Right ventricle myocardium inferior (tissue), 1 donor: ENCODE measurements at regions of chr20 and their contacts with region 1.

Region 1: DNA sequence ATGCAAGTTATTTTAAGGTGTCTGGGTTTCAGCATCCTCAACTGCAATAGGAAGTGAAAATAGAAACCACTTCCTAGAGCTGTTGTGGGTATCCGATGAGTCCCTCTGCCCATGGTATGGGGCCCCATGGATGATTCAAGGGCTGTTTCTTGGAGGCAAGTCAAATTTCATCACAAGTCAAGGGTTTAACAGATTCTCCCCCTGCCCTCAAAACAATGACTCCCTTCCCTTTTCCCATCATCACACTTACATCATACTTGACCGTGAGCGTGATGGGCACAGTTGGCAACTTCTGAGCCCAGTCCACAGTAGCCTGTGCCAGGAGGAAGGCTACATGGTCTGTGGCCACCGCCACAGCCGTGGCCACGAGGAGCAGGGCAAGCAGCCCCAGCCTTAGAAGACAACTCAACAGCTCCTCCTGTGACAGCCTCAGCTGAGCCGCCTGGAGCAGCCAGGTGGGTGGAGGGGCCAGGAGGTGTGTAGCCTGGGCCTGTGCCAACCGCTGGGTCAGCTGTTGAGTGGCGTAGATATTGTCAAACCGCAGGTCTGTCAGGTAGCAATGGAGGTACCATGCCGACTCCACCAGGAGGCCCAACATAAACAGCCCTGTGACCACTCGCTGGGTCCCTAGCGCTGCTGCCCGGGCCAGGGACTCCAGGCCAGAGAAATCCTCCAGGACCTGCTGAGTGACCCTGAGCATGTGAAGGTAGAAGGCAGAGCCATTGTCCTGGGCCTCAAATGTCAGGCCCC is 5.2 kb downstream of the OCSTAMP start:
- DNase-seq: no peak
- ATAC-seq: no peak

Region 2: GRCh38 chr20:46501337-46501942 is 43.8 kb before region 1 on chr20:
- intact Hi-C with region 1: loop called (anchors 5 kb)
- DNase-seq: no peak
- ATAC-seq: no peak

Region 3: GRCh38 chr20:46592580-46593362 is 47.5 kb after region 1 on chr20:
- intact Hi-C with region 1: no loop called
- DNase-seq: no peak
- ATAC-seq: no peak